ENCODE measurements at regions of chr14 and their contacts with region 1.

Region 1: GRCh38 chr14:64503478-64504309 is at the start of gene ZBTB25:
- DNase-seq: peak; percentile 80

Region 2: DNA sequence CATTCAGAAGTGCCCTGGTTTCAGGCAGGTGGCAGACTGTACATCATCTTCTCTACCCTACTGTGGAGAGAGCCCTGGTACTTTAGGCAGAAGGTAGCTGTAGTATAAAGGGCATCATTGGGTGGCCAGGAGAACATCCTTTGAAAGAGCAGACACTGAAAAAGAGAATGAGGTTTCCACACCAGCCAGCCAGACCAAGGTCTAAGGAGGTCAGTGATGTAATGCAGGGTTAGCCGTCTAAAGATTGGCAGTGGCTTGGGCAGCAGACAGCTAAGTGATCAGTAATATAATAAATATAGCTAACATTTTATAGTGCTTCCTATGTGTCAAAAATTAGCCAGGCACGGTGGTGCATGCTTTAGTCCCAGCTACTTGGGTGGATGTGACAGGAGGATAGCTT is 12.1 kb before region 1 on chr14:
- CTCF ChIA-PET with region 1: interaction called, 3 read pairs
- POLR2A ChIA-PET with region 1: interaction called, 10 read pairs
- DNase-seq: no peak

Region 3: DNA sequence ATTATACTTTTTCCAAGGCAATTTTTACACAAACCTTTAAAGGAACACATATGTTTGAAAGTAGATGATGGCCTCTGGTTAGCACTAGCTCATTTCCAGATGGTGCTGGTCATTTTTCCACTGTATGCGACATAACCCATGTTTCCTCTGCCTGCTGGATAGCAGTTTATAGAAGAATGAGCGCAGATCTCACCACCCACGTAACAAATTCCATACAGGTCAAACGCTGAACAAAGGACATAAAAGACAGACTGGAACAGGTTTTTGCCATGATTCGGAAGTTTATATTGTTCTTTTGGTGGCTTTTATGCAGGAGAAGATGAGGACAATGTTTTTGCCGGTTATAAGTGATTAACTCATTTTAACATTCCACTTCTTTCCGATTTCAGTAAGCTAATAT is 76.8 kb after region 1 on chr14:
- CTCF ChIA-PET with region 1: no interaction called
- POLR2A ChIA-PET with region 1: no interaction called
- DNase-seq: no peak

Measured in HEK293T (cell line).